Left cardiac atrium (tissue), 4 donors: ENCODE measurements at regions of chr3 and their contacts with region 1.

Region 1: DNA sequence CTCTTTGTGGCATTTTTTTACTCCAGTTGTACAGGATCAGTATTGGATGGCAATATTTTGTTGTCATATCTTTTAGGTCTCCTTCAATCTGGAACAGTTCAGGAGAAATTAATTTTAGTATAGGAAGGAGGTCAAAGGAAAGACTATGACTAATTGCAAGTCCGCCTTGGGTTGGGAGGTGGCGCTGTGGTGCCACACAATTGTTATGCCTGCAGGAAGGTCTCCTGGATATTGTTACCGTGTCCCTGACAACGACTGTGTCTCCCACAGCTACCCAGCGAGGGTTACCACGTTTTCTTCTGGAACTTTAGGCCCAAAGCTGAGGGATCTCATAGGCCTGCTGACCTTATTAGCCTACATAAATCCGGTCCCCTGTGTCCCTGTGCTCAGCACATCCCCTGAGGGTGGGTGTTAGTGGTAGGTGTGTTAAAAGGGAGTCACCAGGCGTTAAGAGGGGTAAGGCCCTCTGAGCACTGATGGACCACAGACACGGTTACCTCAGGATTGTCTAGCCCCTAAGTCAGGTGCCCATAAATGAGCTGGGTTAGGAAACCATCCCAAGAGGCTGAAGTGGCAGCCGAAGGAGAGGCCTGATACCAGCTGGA is 31.5 kb downstream of the KCNAB1 start:
- DNase-seq: peak; percentile 67
- ATAC-seq: peak in 1 of 2 donors; percentile 67

Region 2: DNA sequence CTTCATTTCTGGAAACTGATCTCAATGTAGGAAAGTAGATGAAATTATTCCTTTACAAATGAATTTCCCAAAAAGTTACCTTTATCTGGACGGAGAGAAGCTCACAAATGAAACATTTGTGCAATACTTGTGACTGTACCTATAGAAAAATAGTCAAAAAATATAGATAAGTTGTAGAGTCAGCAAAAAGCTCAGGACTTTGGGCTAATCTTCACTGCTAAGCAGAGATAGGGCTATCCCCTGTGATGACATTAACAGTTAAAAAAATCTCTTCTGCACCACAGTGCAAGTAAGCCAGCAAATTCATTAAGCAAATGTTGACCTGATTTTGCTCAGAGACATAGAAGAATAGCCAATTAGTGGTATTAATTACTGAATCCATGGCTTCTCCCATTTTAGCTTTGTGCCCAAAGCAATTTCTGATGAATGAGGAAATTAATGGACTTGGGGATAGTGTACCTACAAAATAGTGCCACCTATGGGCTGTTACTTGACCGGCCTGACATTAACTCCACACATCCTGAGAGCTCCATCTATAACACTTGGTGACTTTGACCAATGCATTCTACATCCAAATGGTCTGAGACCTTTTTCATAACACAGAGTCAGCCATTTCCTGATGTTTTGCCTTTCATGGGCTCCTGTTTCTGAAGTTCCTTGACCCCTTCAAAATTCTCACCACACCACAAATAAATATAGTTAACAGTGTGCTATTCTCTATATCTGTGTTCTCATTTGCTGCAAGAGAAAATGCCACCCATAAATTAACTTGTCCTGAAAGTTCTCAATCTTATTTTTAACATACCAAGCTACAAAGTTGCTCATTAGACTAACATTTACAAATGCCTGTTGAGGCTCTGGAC is 298.0 kb after region 1 on chr3:
- intact Hi-C with region 1: loop called (anchors 10 kb)
- DNase-seq: no peak
- ATAC-seq: peak; percentile 55 to 58

Region 3: DNA sequence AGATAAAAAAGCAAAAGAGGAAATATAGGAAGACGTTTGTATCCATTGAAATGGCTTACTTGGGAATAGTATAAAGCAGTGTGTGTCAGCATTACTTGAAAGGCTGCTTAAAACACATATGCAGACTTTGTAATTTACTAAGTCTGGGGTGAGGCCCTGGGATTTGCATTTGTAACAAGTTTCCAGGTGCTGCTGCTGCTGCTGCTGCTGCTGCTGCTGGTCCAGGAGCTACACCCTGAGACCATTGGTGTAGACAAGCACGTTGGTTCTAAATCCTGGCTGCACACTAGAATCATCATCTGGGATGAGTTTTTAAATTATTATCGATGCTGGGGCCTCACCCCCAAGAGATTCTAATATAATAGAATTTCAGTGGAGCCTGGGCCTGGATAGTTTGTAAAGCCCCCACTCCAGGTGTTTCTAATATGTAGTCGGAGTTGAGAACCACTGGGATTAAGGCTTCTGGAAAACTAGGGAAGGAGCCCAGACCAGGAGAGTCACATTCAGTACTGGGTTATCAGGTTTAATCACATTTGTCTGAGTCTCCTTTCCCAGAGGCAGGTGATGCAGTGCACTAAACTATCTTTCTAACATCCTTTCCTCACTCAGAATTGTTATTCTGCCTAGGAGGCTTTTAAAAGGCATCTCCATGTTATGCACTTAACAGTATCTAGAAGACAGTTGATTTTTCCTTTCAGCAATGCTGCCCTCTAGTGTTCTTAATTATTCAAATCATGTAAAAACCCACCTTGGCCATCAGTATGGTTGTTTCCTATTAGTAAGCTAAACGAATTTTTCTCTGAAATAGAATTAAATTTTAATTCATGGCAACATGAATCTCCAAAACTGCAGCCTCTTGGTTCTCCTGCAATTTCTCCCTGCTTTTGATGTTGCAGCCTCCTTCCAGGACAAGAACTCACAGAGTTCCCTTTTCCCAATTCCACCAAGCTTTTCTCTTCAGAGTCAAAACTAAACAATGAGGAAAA is 357.6 kb after region 1 on chr3:
- intact Hi-C with region 1: loop called (anchors 2 to 5 kb)
- DNase-seq: no peak
- ATAC-seq: peak; percentile 55 to 62

Region 4: DNA sequence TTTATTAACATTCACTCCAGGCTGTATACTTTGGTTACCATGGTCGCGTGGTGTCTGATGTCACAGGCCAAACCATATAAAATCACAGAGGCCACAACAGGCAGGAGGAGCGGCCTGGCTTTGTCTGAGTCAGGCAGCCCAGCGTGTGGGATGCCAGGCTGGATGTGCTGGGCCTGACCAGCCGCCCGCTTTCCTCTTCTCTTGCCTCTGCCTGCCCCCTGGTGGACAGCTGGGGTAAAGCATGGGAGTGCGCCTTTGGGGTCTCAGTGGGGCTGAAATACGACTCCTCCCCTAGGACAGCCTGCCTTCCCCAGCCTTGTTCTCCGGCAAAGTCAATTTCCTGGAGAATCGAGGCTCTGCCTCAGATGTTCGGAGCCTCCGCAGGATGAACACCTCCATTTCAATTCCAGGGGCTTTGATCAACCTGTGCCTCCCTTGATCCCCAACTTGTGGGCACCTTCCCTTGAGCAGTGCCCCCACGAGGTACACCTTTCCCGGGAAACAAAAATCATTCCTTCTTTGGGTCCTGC is 929.8 kb after region 1 on chr3:
- intact Hi-C with region 1: loop called in 1 of 2 experiments (anchors 5 kb)
- DNase-seq: peak; percentile 93
- ATAC-seq: peak; percentile 81 to 93

Region 5: DNA sequence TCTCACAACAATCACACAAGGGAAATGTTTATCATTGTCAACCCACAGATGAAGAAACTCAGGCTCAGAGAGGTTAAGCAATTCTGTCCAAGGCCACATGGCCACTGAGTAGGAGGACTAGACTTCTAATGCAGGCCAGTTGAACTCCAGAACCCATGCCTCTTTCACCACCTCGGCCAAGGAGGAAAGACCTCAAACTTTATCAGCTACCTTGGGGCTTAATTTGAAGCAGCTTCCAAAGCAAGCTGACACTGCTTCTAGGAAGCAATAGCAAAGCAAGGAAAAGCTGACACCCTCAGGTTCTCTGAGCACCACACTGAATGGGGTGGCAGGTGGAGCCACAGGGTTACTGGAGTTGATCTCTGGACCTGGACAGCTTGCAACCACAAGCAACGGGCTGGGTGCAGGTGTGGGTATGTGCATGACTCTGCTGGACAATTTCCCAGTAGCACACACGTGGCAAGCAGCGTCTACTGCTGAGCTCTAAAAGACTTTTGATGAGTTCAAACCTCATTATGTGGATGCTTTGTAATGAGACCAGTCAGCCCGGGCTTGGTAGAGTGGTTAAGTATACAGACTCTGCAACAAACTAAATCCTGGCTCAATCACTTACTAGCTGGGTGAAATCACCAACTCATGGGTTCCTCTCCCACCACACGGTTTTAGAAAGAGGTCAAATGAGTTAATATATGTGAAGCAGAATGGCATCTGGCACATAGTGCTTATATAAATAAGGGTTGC is 984.9 kb after region 1 on chr3:
- intact Hi-C with region 1: loop called in 1 of 2 experiments (anchors 2 kb)
- DNase-seq: no peak
- ATAC-seq: peak; percentile 15 to 19